Activated CD4-positive, alpha-beta T cell treated with anti-CD3 and anti-CD28 coated beads, Interleukin-2, amount 10 ng/mL, durations not matched to agents 7 days and 5 days (primary cell): ENCODE measurements at regions of chr3 and their contacts with region 1.

Region 1: GRCh38 chr3:43389388-43390254 is 103.3 kb downstream of the SNRK start:
- DNase-seq: peak; percentile 86
- H3K4me3 Mint-ChIP-seq: peak overlapping the region; percentile 32
- H3K27ac Mint-ChIP-seq: peak overlapping the region; percentile 92
- H3K4me1 Mint-ChIP-seq: peaks cover 44% of the 10 kb centered on the region
- H3K27me3 Mint-ChIP-seq: peaks cover 4% of the 10 kb centered on the region

Region 2: GRCh38 chr3:41987627-41988026 is 1402.0 kb before region 1 on chr3:
- CTCF ChIA-PET with region 1: no interaction called
- POLR2A ChIA-PET with region 1: no interaction called
- DNase-seq: no peak
- H3K4me3 Mint-ChIP-seq: no peak overlapping the region
- H3K27ac Mint-ChIP-seq: no peak overlapping the region
- H3K4me1 Mint-ChIP-seq: no peaks in the 10 kb centered on the region
- H3K27me3 Mint-ChIP-seq: no peaks in the 10 kb centered on the region

Region 3: DNA sequence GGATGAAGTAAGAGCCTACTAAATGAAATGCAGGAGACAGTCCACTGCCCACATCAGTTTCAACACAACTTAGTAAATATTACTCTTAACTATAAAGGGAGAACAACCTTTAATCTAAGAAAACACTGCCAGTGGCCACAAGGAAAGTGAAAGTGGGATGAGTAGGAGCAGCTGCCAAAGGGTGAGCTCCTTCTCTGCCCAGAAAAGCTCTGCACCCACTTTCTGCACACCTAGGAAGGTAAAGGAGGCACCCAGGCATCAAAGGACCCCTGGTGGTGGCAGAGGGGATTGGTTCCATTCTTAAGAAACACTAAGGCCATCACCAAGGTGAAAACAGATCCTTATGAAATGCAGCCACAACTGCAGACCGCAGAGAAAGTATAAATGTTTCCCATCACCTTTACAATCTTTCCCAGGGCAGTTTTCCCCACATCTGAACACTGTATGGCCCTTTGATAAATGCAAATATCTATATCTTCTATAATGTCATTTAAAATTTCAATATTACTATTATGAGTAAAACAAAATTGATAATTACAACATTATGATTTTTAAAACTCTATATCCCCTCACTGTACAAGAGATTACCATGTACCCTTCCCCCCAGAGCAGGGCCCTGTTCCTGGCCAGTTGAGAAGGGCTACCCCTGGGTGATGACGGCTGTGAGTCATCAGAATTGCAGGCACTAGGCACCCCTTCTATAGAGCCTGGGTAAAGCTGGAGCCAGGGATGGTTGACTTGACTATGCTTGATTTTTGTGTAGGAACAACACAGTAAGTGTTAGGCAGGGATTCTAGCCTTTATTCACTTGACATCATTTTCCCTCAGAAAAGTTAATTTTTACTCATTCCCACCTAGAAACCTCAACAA is 11.3 kb before region 1 on chr3:
- CTCF ChIA-PET with region 1: interaction called, 15 read pairs
- POLR2A ChIA-PET with region 1: no interaction called
- DNase-seq: peak; percentile 81
- H3K4me3 Mint-ChIP-seq: no peak overlapping the region
- H3K27ac Mint-ChIP-seq: no peak overlapping the region
- H3K4me1 Mint-ChIP-seq: peaks cover 17% of the 10 kb centered on the region
- H3K27me3 Mint-ChIP-seq: no peaks in the 10 kb centered on the region